ENCODE measurements at regions of chr6 and their contacts with region 1.

Region 1: GRCh38 chr6:118800394-118801071 is 93.4 kb upstream of the ASF1A start:
- DNase-seq: peak; percentile 85 to 92 (median 92)
- H3K4me3 ChIP-seq: peak overlapping the region in 3 of 7 experiments; percentile 20 to 50 (median 41)
- H3K27ac ChIP-seq: no peak overlapping the region
- H3K4me1 ChIP-seq: peaks cover 0 to 6% (median 3%) of the 10 kb centered on the region in 4 experiments
- H3K27me3 ChIP-seq: no peaks in the 10 kb centered on the region

Region 2: DNA sequence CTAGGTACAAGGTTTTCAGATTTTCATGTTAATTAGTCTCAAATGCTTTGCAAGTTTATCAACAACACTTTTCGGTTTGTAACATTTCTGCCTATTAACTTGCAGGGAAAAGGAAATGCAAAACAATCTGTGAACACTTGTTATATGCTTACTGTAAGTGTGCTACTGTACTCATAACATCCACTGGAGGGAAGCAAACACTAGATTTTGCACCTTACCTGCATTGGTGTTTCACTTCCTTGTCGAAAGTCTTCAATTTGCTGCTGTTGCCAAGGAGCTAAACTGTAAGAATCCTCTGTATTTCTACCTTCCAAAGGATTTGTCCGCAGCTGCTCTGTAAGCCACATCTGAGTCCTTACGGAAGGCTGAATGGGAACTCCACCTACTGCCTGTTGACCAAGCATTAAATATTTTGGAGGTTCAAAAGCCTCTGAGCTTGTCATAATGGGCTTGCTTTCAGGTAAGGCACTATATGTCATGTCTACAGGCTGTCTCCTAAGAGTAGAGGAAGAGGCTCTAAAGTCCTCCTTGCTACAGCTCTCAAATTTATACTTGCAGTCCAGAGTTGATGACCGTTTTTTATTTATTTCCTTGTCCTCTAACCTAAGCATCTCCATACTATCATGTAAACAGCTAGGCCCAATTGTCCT is 235.1 kb before region 1 on chr6:
- CTCF ChIA-PET with region 1: interaction called, 11 read pairs
- POLR2A ChIA-PET with region 1: no interaction called
- DNase-seq: peak; percentile 48 to 73 (median 70)
- H3K4me3 ChIP-seq: no peak overlapping the region
- H3K27ac ChIP-seq: no peak overlapping the region
- H3K4me1 ChIP-seq: no peaks in the 10 kb centered on the region
- H3K27me3 ChIP-seq: no peaks in the 10 kb centered on the region

Region 3: GRCh38 chr6:118787724-118788423 is 12.7 kb before region 1 on chr6:
- CTCF ChIA-PET with region 1: interaction called, 36 read pairs
- POLR2A ChIA-PET with region 1: no interaction called
- DNase-seq: peak in 1 of 3 donors; percentile 19
- H3K4me3 ChIP-seq: no peak overlapping the region
- H3K27ac ChIP-seq: no peak overlapping the region
- H3K4me1 ChIP-seq: peaks cover 3 to 18% (median 11%) of the 10 kb centered on the region in 4 experiments
- H3K27me3 ChIP-seq: no peaks in the 10 kb centered on the region

Measured in common myeloid progenitor, CD34-positive (primary cell).